Naive thymus-derived CD4-positive, alpha-beta T cell (primary cell): ENCODE measurements at regions of chr10 and their contacts with region 1.

Region 1: DNA sequence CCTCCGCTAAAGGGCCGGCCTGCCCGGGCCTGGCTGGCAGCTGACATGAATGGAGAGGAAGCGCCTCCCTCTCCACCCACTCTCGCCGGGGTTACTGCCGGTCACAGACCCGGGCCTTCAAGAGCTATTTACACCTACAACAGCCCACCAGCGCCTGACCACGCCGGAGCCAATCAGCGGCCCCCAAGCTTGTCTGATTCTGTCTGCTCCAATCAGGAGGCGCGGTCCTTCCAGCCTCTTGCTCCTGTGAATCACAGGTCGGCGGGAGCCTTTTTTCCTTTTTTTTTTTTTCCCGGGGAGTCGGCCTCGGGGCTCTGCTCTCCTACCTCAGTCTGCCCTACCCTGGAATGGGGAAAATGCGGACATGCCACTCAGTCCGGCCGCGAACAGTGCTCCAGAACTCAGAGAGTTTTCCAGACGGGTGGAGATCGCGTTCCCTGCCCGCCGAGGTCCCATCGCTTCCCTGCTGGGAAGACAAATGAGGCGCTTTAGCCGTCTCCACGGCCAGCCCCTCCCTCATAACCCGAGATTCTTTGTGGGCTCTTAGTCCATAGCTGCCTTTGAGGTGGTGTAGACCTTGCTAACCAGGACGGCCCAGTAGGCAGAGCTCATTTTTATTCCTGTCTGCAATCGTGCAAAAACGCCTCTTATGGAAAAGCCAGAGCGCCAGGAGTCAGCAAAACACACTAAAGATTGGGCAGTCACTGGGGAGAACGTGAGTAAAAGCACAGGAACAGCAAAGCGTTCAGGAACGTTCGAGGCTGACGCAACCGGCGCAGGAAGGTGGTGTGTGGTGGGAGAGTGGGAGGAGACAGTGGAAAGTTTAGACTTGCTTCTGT is 26.5 kb downstream of the SCD start:
- DNase-seq: peak; percentile 52 to 91 (median 72)
- ATAC-seq: peak; percentile 89
- H3K4me3 ChIP-seq: peak overlapping the region; percentile 96
- H3K4me3 Mint-ChIP-seq: no peak overlapping the region
- H3K27ac ChIP-seq: peak overlapping the region; percentile 85
- H3K27ac Mint-ChIP-seq: no peak overlapping the region
- H3K4me1 ChIP-seq: peaks cover 32 to 41% of the 10 kb centered on the region in 2 donors
- H3K4me1 Mint-ChIP-seq: peaks cover 14 to 39% (median 27%) of the 10 kb centered on the region in 7 donors
- H3K27me3 ChIP-seq: no peaks in the 10 kb centered on the region
- H3K27me3 Mint-ChIP-seq: no peaks in the 10 kb centered on the region

Region 2: DNA sequence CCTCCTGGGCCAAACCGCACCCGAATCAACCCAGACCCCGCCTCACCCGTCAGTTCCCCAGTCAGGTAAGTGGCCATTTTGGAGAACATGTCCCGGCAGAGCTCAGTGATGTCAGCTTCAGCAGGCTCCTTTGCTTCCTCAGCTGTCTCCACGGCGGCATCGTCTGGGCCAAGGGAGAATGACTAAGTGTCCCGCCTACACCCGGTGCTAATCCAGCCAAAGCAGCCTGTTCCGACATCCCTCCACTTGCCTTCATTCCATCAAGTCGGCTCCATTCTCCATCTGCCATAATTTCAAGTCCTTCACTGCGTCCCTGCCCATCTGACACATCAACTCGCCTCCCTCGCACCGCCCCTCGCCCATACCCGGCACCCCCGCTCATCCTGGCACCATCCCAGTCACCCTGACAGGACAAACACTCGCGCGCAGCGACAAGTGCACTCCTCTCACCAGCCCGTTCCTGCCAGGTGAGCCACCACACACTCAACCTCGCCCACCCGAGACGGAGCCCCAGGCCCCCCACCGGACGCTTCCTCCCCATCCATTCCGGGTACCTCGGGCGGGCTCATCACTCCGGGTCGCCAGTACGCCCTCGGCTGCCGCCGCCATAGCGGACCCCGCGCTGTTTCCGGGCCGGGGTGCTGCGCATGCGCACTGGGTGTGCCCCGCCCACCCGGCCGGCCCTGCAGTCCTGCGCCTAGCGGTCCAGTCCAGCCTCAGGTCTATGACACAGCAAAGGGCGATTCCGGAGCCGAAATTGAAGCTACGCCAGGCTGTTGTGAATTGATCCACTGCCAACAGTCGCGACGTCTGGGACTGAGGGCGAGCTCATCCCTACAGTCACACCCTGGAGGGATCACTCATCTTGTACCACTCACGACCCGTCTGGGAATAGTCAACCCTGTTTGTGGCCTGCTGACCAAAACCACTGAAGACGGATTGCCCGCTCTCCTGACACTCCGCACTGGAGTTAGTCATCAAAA is 87.2 kb before region 1 on chr10 and contains the start of gene BLOC1S2:
- CTCF ChIA-PET with region 1: no interaction called
- POLR2A ChIA-PET with region 1: interaction called, 3 read pairs
- intact Hi-C with region 1: loop called (anchors 1 to 2 kb)
- DNase-seq: peak; percentile 71 to 97 (median 86)
- ATAC-seq: peak; percentile 92
- H3K4me3 ChIP-seq: peak within 1 kb of the TSS; percentile 99
- H3K4me3 Mint-ChIP-seq: peak within 1 kb of the TSS; percentile 95 to 100 (median 100)
- H3K27ac ChIP-seq: peak within 1 kb of the TSS; percentile 86
- H3K27ac Mint-ChIP-seq: peak within 1 kb of the TSS; percentile 94 to 100 (median 99)
- H3K4me1 ChIP-seq: peaks cover 10 to 17% of the 10 kb centered on the region in 2 donors
- H3K4me1 Mint-ChIP-seq: peaks cover 14 to 32% (median 26%) of the 10 kb centered on the region in 7 donors
- H3K27me3 ChIP-seq: no peaks in the 10 kb centered on the region
- H3K27me3 Mint-ChIP-seq: no peaks in the 10 kb centered on the region
- total RNA-seq, gene BLOC1S2: 31.5 to 51.3 (median 39.9) TPM

Region 3: DNA sequence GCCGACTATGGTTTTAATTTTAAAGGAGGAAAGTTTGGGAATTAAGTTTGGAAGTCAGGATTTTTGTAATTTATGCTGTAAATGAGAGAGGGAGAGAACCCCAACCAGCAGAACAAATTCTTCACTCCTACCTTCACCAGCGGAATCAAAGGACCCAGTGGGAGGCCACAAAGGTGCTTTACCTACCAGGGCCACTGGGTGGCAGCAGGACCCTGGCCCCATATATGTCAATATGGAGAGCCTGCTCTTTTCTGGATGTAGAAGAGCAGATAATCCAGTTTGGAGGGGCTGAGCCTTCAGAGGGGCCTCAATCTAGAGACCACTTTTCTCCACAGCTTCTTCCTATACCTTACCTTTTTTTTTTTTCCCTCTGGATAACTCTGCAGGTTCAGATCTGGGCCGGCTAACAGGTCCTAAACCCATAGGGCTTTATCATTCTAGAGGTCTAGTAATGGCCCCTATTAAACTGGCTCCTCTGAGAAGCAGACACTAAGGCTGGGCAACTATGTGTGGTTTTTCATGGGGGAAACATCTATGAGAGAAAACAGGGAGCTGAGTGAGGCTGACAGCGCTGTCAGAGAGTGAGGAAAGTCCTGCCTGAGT is 35.0 kb before region 1 on chr10:
- CTCF ChIA-PET with region 1: interaction called, 3 read pairs
- POLR2A ChIA-PET with region 1: no interaction called
- intact Hi-C with region 1: loop called in 1 of 2 experiments (anchors 2 kb)
- DNase-seq: peak; percentile 50 to 82 (median 74)
- ATAC-seq: peak; percentile 94
- H3K4me3 ChIP-seq: no peak overlapping the region
- H3K4me3 Mint-ChIP-seq: no peak overlapping the region
- H3K27ac ChIP-seq: no peak overlapping the region
- H3K27ac Mint-ChIP-seq: peak overlapping the region in 2 of 9 donors; percentile 69 to 82
- H3K4me1 ChIP-seq: no peaks in the 10 kb centered on the region
- H3K4me1 Mint-ChIP-seq: peaks cover 0 to 35% (median 0%) of the 10 kb centered on the region in 7 donors
- H3K27me3 ChIP-seq: no peaks in the 10 kb centered on the region
- H3K27me3 Mint-ChIP-seq: peaks cover 0 to 15% (median 0%) of the 10 kb centered on the region in 5 donors

Region 4: DNA sequence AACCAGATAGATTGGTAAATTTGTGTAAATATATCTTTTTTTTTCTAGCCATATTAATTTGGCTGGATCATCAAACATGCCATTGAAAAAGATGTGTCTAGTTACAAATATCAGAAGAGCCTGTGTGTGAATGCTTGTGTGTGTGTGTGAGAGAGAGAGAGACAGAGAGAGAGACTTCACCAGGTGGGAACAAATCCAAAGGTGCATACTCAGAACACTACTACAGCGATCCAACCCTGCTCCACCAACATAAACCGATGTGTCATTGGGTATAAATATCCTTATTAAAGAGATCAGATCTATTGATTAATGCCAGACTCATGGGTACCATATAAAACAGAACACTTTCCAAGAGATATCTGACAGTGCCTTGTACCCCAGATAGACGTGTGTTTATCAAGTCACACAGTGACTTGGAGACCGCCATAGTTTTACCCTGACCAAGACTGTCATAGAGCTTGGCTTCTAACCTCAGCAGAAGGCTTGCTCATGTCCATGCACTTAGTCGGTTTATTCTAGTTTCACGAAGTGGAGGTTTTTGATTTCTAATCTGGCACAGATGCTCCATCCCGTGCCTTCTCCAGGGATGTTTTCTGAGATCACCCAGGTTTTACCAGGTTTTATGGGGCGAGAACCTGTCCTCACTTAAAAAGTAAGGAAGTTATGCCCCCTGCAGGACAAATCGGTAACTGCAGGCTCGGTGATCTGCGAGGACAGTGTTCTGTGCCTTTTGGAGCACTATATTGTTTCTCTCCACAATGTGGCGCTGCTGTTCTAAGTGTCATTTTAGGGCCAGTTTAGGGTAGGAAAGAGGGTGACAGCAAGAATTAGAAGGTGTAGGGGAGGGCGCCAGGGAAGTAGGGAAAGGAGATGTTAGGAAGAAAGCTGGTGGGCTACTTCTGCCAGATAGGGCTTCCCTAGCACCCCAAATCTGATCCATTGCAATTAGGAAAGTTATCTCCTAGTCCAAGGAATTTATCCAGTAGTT is 60.0 kb after region 1 on chr10:
- CTCF ChIA-PET with region 1: interaction called, 3 read pairs
- POLR2A ChIA-PET with region 1: no interaction called
- intact Hi-C with region 1: loop called (anchors 1 kb)
- DNase-seq: peak; percentile 84 to 96 (median 92)
- ATAC-seq: peak; percentile 100
- H3K4me3 ChIP-seq: no peak overlapping the region
- H3K4me3 Mint-ChIP-seq: no peak overlapping the region
- H3K27ac ChIP-seq: no peak overlapping the region
- H3K27ac Mint-ChIP-seq: peak overlapping the region in 1 of 9 donors; percentile 9
- H3K4me1 ChIP-seq: no peaks in the 10 kb centered on the region
- H3K4me1 Mint-ChIP-seq: peaks cover 0 to 18% (median 0%) of the 10 kb centered on the region in 7 donors
- H3K27me3 ChIP-seq: no peaks in the 10 kb centered on the region
- H3K27me3 Mint-ChIP-seq: no peaks in the 10 kb centered on the region